Tibial artery (tissue), 4 donors: ENCODE measurements at regions of chr9 and their contacts with region 1.

Region 1: DNA sequence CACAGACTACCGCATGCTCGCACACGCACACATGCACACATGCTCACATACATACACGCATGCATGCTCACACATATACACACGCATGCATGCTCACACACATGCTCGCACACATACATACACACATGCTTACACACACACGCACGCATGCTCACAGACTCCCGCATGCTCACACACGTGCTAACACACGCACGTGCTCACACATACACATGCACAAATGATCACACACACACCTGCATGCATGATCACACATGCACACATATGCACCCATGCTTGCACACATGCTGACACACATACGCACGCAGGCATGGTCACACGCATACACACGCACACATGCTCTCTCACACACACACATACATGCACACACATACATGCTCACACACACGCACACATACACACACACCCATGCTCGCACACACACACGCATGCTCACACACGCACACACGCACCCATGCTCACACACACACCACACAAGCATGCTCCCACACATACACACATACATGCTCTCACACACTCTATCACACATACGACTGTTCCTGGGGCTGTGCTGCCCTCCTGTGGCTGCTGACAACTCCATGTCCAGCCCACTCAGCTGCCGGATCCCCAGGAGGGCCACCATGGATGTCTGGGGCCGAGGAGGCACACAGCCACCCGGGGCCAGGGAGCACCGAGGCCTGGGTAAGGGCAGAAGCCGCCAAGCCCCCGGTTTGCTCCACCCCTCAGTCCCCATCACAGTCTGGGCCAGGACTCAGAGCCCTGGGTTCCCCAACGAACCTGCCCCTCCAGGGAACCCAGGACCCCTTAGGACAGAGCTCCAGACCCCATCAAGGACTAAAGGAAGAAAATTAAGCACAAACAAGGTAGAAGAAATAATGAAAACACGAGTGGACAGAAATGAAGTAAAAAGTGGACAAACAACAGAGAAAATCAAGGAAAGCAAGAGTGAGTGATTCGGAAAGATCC is 31.4 kb upstream of the EGFL7 start:
- DNase-seq: peak; percentile 76 to 85
- H3K4me3 ChIP-seq: no peak overlapping the region
- H3K27ac ChIP-seq: no peak overlapping the region
- H3K4me1 ChIP-seq: peaks cover 0 to 23% (median 14%) of the 10 kb centered on the region in 4 donors
- H3K27me3 ChIP-seq: peaks cover 0 to 17% of the 10 kb centered on the region in 2 donors
- CTCF ChIP-seq: peak; percentile 84 to 94

Region 2: DNA sequence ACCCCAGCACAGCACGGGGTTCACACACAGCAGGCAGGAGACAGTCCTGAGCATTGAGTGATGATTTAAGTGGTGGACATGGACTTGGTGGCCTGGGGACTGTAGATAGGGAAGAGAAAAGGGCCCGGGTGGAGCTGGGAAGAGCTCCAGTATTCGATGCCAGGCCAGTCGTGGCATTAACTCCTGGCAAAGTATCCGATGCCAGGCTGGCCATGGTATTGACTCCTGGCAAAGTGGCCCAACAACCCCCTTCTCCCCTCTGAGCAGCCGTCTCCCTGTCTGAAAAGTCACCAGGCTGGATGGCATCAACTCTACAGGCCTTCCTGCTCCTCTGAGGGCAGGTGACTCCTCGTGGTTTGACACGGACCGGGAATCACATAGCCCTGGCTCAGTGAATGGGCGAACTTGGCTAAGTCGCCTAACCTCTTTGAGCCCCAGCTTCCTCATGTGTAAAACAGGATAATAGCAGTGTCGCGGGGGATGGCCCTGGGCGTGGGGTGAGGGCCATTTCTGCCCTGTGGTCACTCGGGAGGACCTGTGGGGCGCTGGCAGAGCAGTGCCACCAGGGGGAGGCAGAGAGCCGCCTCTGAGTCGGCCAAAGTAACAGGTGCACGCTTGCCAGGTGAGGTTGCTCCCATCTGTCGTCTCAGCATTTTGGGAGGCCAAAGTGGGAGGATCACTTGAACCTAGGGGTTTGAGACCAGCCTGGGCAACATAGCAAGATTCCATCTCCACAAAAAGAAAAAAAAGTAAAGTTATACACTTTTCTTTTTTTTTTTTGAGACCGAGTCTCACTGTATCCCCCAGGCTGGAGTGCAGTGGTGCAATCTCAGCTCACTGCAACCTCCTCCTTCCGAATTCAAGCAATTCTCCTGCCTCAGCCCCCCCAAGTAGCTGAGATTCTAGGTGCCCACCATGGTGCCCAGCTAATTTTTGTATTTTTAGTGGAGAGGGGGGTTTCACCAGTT is 142.8 kb before region 1 on chr9:
- intact Hi-C with region 1: loop called (anchors 2 kb)
- DNase-seq: peak; percentile 59 to 84
- H3K4me3 ChIP-seq: no peak overlapping the region
- H3K27ac ChIP-seq: peak overlapping the region; percentile 34 to 46
- H3K4me1 ChIP-seq: peaks cover 0 to 38% (median 30%) of the 10 kb centered on the region in 4 donors
- H3K27me3 ChIP-seq: no peaks in the 10 kb centered on the region
- CTCF ChIP-seq: peak; percentile 97 to 98

Region 3: GRCh38 chr9:136572003-136572827 is 59.1 kb before region 1 on chr9:
- intact Hi-C with region 1: loop called (anchors 10 kb)
- DNase-seq: no peak
- H3K4me3 ChIP-seq: no peak overlapping the region
- H3K27ac ChIP-seq: peak overlapping the region; percentile 58 to 72
- H3K4me1 ChIP-seq: peaks cover 0 to 68% (median 54%) of the 10 kb centered on the region in 4 donors
- H3K27me3 ChIP-seq: no peaks in the 10 kb centered on the region
- CTCF ChIP-seq: no peak